GM13976 (cell line): ENCODE measurements at regions of chr3 and their contacts with region 1.

Region 1: GRCh38 chr3:186259612-186260383 is 102.2 kb downstream of the DGKG start:
- DNase-seq: peak; percentile 88
- CTCF ChIP-seq: peak; percentile 93

Region 2: DNA sequence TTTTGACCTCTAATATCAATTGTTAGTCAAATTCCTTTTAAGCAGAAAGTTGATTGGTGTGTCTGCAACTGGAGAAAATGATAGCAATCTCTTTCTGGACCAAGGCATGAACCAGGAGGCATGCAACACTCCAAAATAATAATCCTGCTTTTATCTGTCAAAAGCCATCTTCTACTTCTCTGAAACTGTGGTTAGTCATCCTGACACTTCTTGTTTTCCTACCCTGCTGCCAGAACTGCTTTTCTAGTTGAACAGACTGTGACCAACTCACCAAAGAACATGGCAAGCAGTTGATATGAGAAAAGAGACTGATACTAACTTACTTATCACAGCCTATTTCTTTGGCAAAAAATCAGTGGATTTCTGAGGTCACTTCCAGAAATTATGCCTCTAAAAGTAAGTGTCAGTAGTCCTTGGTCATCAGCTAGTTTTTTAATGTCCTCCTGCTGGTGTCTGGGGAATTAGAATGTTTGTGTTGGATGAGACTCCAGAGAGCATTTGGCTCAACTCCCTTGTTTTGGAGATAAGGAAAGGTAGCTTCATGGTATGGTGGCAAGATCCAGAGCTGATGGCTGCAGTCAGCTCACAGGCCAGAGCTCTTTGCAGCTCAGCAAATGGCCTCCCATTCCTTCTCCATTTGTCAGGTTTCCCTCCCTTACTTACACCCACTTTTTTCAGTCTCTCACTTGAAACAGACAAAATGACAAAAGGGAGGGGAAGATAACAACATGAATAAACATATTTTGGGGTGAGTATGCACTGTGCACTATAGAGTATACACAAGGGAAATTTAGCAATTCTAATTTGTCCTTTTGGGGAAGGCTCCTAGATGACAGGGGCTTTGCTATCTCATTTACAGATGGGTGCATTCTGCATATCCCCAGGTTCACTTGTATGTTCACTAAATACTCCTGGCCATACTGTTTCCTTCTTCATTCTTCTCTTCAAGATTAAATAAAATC is 277.4 kb after region 1 on chr3:
- in situ Hi-C with region 1: loop called (anchors 5 kb)
- DNase-seq: no peak
- CTCF ChIP-seq: no peak